Activated naive CD4-positive, alpha-beta T cell treated with anti-CD3 and anti-CD28 coated beads for 36 hours (primary cell): ENCODE measurements at regions of chr10 and their contacts with region 1.

Region 1: DNA sequence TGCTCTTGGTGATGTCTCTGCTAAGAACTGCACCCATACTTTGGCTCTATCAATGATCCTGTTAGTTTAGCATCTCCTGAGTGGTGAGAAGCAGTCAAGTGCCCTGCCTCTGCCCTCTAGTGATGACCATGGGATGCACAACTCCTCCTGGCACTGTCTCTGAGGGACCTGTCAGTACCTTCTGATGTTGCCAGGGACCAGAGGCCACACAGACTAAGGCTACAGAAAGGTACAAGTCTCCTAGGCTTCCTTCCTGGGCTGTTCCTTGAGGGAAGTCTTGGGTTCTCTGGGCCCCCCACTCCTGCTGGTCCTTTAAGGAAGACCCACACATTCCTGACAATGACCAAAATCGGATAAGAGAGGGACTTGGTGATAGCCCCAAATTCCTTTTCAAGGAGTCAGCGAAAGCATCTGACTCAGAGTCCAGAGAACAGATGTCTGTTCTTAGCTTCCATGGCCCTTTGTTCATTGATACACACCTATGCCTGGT is 15.3 kb downstream of the NKX2-3 start:
- DNase-seq: peak; percentile 40
- H3K4me3 Mint-ChIP-seq: no peak overlapping the region
- H3K27ac Mint-ChIP-seq: no peak overlapping the region
- H3K4me1 Mint-ChIP-seq: no peaks in the 10 kb centered on the region
- H3K27me3 Mint-ChIP-seq: peaks cover 40% of the 10 kb centered on the region

Region 2: GRCh38 chr10:99435986-99436638 is 112.0 kb before region 1 on chr10:
- CTCF ChIA-PET with region 1: interaction called, 6 read pairs
- intact Hi-C with region 1: loop called (anchors 2 kb)
- DNase-seq: no peak
- H3K4me3 Mint-ChIP-seq: no peak overlapping the region
- H3K27ac Mint-ChIP-seq: no peak overlapping the region
- H3K4me1 Mint-ChIP-seq: peaks cover 21% of the 10 kb centered on the region
- H3K27me3 Mint-ChIP-seq: no peaks in the 10 kb centered on the region

Region 3: DNA sequence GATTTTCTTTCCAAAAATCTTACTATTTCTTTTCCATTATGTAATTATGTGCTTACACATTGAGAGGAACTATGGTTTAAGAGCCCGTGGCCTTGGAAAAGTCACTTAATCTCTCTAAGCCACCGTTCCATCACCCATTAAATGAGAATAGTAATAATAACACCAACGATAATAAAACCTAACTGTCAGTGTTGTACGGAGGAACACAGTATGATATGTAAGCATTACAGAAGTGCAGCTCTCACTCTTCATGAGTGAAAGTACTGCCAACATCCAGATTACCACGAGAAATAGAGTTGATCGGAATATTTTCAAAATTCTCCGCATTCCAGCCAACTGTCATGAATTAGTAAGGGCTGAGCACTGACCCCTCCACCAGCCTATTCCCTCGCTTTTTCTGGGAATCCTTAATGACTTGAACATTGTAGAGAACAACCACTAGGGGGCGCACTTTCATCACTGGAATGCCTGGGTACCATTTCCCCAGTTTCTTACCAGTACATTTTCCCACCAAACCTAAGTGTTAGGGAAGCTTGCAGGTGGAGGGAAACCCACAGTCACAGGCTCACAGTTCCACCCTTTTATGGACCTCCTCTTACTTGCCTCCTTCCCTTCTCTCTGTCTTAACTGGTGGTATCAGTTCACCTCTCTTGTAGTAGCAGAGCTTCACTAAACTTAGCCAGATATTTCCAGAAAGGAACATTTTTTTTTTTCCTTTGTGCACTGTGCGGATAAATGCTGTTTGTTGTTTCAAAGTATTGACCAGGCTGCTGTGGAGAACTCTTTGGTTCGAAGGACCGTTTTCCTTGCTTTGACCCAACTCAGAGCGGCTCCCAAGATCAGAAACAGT is 12.4 kb after region 1 on chr10:
- CTCF ChIA-PET with region 1: interaction called, 13 read pairs
- intact Hi-C with region 1: no loop called
- DNase-seq: peak; percentile 69
- H3K4me3 Mint-ChIP-seq: no peak overlapping the region
- H3K27ac Mint-ChIP-seq: no peak overlapping the region
- H3K4me1 Mint-ChIP-seq: peaks cover 3% of the 10 kb centered on the region
- H3K27me3 Mint-ChIP-seq: peaks cover 19% of the 10 kb centered on the region